ENCODE measurements at regions of chr1 and their contacts with region 1.

Region 1: DNA sequence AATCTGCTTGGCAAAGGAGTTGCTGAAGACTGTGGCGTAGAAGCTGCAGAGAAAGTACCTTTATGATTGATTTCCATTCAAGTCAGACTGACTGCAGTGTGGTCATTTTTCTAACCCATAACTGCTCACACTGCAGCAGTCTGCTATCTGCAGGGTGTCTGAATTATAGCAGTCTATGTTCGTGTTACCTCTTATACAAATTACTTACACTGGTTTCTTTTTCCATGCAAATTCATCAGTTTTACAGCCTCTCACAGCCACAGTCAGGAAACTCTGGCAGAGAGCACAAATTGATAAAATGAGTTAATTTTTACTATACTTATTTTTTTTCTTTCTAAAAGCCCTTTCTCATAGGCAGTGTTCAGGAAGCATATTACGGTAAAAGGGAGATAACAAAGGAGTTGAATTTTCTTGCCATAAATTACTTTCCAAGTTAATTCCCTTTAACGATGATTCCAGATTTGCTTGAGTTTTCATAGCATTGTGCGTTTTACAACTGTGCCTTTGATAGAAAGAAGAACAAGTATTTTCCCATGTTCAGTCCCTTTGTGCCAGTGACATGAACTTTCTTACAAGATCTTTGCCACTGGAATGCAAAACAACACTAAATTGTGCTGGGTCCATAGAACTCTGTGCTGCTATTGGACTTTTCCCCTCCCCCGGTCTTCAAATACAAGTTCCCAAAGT is 261.5 kb downstream of the NFIA start:
- DNase-seq: no peak
- H3K4me3 ChIP-seq: no peak overlapping the region
- H3K27ac ChIP-seq: no peak overlapping the region
- H3K4me1 ChIP-seq: no peaks in the 10 kb centered on the region
- H3K27me3 ChIP-seq: no peaks in the 10 kb centered on the region
- CTCF ChIP-seq: no peak
- POLR2A ChIP-seq: no peak

Region 2: GRCh38 chr1:60697204-60697994 is 646.5 kb before region 1 on chr1:
- intact Hi-C with region 1: loop called (anchors 10 kb)
- DNase-seq: no peak
- H3K4me3 ChIP-seq: no peak overlapping the region
- H3K27ac ChIP-seq: no peak overlapping the region
- H3K4me1 ChIP-seq: no peaks in the 10 kb centered on the region
- H3K27me3 ChIP-seq: no peaks in the 10 kb centered on the region
- CTCF ChIP-seq: no peak
- POLR2A ChIP-seq: no peak

Region 3: DNA sequence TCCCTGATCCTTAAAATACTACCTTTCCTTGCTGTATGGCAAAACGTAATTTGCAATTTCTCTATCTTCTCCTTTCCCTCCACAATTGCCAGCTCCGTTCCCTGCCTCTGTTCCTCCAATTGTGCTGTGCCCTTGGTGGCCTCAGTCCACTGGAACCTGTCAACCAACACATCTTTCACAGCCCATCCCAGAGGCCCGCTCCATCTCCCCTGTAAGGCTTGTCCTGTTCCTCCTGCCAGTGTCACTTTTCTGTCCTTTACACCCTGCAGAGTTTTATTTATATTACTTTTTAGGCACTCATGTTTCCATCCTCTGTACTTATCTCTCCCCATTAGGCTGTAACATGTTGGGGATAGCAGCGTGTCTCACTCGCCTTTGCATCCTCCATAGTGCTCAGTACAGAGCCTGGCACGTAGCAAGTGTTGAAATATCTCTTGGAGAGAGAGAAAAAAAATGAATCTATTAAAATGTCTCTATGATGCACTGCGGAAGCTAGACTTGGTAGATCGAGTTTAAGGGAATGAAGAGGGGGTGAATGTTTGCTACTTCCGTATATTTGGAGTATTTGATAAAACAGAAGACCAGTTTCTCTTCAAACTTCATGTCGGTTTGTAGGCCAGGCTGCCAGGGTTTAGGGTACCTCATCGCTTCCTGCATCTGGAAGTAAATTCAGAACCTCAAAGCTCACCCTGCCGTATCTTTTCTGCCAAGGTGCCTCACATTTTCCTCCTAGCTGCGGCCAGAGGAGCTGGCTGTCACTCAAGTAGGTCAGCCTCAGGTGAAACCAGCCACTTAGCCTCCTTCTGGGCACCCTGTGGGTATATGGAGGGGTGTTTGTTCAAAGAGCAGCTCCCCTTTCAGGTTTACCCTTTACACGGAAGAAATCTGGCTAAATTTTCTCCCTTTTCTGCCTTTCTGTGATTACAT is 77.3 kb after region 1 on chr1:
- intact Hi-C with region 1: no loop called
- DNase-seq: no peak
- H3K4me3 ChIP-seq: no peak overlapping the region
- H3K27ac ChIP-seq: peak overlapping the region; percentile 22 to 60
- H3K4me1 ChIP-seq: peaks cover 0 to 12% of the 10 kb centered on the region in 2 donors
- H3K27me3 ChIP-seq: no peaks in the 10 kb centered on the region
- CTCF ChIP-seq: no peak
- POLR2A ChIP-seq: no peak

Measured in breast epithelium (tissue), 4 donors.